ENCODE measurements at regions of chr3 and their contacts with region 1.

Region 1: GRCh38 chr3:125684199-125684598 is 88.9 kb upstream of the OSBPL11 start:
- DNase-seq: peak; percentile 74
- H3K4me3 ChIP-seq: no peak overlapping the region
- H3K27ac ChIP-seq: peak overlapping the region in 3 of 4 donors; percentile 72 to 84 (median 80)
- H3K4me1 ChIP-seq: peaks cover 0 to 31% (median 13%) of the 10 kb centered on the region in 4 donors
- H3K27me3 ChIP-seq: no peaks in the 10 kb centered on the region
- CTCF ChIP-seq: peak in 2 of 4 experiments; percentile 21 to 34
- EP300 ChIP-seq: no peak
- POLR2A ChIP-seq: no peak

Region 2: DNA sequence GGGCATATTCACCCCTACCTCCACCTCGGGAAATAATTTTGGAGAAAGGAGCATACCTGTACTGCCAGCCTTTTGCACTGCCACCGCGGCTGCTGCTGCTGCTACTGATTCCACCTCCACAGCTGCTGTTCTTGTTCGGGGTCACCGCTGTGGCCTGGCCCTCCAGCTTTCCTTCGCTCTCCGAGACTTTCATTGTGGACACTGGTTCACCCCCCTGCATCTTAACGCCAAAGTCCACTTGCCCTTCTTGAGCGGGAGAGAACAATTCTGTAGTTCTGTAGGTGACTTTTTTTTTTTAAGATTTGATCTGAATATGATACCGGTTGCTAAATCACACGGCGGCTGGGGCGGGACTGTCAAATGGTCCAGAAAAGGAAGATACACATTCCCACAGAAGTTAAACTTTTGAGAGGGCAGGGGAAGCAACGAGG is 89.6 kb before region 1 on chr3:
- intact Hi-C with region 1: loop called (anchors 5 kb)
- DNase-seq: no peak
- H3K4me3 ChIP-seq: peak overlapping the region; percentile 64 to 84 (median 68)
- H3K27ac ChIP-seq: peak overlapping the region; percentile 89 to 97 (median 92)
- H3K4me1 ChIP-seq: peaks cover 0 to 52% (median 38%) of the 10 kb centered on the region in 4 donors
- H3K27me3 ChIP-seq: no peaks in the 10 kb centered on the region
- CTCF ChIP-seq: no peak
- EP300 ChIP-seq: no peak
- POLR2A ChIP-seq: no peak

Region 3: GRCh38 chr3:125622381-125622788 is 61.8 kb before region 1 on chr3:
- intact Hi-C with region 1: loop called (anchors 1 kb)
- DNase-seq: peak; percentile 92
- H3K4me3 ChIP-seq: no peak overlapping the region
- H3K27ac ChIP-seq: peak overlapping the region in 3 of 4 donors; percentile 58 to 73 (median 66)
- H3K4me1 ChIP-seq: peaks cover 0 to 37% (median 5%) of the 10 kb centered on the region in 4 donors
- H3K27me3 ChIP-seq: no peaks in the 10 kb centered on the region
- CTCF ChIP-seq: no peak
- EP300 ChIP-seq: peak; percentile 87 to 98 (median 92)
- POLR2A ChIP-seq: no peak

Measured in sigmoid colon (tissue), 7 donors.